ENCODE measurements at regions of chr3 and their contacts with region 1.

Region 1: GRCh38 chr3:27428446-27428845 is 55.7 kb downstream of the SLC4A7 start:
- DNase-seq: no peak
- ATAC-seq: no peak
- H3K4me3 ChIP-seq: no peak overlapping the region
- H3K27ac ChIP-seq: no peak overlapping the region
- H3K4me1 ChIP-seq: peaks cover 15% of the 10 kb centered on the region
- H3K27me3 ChIP-seq: no peaks in the 10 kb centered on the region
- CTCF ChIP-seq: no peak

Region 2: GRCh38 chr3:27125821-27126501 is 302.5 kb before region 1 on chr3:
- intact Hi-C with region 1: no loop called
- DNase-seq: no peak
- ATAC-seq: no peak
- H3K4me3 ChIP-seq: no peak overlapping the region
- H3K27ac ChIP-seq: no peak overlapping the region
- H3K4me1 ChIP-seq: no peaks in the 10 kb centered on the region
- H3K27me3 ChIP-seq: no peaks in the 10 kb centered on the region
- CTCF ChIP-seq: no peak

Region 3: DNA sequence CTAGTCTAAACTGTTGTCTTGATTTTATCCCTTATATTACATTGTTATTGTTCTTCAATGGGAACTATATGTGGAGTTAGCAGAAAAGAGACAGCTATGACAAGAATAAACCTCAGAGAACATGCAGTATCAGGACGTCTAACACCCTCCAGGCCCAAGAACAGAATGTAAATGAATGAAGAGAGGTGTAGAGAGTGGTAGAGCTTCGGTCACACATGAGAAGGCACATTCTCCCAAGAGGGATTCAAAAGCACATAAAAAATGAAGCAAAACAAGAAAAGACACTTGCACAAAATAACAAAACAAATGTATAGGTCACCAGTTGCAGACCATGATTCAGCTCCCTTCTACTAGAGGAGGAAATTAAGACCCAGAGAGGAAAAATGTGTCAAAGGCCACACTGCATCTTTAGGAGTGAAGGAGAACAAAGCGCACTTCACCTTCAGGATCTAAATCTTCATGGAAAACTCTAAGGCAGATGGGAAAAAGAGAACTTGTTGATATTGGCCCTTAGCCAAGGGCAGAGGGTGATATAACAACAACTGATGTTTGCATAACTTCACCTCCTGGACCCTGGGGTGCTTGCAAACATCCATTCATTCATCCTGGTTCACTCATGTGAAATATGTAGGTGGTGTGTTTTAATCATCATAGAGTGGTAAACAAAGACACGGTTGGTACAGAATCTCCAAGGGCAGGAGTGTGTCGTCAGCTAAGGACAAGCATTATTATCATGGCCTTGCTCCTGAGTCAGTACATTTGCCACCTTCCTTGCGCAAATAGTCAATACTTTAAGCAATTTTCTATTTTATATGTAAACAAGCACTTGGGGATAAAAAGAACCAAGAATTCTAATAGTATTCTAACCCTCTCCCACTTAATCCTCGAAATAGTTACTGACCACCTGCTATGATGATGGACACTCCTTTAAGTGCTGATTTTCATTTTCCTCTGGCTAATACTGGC is 68.0 kb before region 1 on chr3:
- intact Hi-C with region 1: loop called in 1 of 2 experiments (anchors 5 kb)
- DNase-seq: no peak
- ATAC-seq: no peak
- H3K4me3 ChIP-seq: no peak overlapping the region
- H3K27ac ChIP-seq: no peak overlapping the region
- H3K4me1 ChIP-seq: no peaks in the 10 kb centered on the region
- H3K27me3 ChIP-seq: no peaks in the 10 kb centered on the region
- CTCF ChIP-seq: no peak

Region 4: GRCh38 chr3:27813255-27813654 is 384.8 kb after region 1 on chr3:
- intact Hi-C with region 1: no loop called
- DNase-seq: no peak
- ATAC-seq: no peak
- H3K4me3 ChIP-seq: no peak overlapping the region
- H3K27ac ChIP-seq: no peak overlapping the region
- H3K4me1 ChIP-seq: no peaks in the 10 kb centered on the region
- H3K27me3 ChIP-seq: no peaks in the 10 kb centered on the region
- CTCF ChIP-seq: no peak

Measured in psoas muscle (tissue), 8 donors.